CD4-positive, alpha-beta T cell (primary cell): ENCODE measurements at regions of chr11 and their contacts with region 1.

Region 1: DNA sequence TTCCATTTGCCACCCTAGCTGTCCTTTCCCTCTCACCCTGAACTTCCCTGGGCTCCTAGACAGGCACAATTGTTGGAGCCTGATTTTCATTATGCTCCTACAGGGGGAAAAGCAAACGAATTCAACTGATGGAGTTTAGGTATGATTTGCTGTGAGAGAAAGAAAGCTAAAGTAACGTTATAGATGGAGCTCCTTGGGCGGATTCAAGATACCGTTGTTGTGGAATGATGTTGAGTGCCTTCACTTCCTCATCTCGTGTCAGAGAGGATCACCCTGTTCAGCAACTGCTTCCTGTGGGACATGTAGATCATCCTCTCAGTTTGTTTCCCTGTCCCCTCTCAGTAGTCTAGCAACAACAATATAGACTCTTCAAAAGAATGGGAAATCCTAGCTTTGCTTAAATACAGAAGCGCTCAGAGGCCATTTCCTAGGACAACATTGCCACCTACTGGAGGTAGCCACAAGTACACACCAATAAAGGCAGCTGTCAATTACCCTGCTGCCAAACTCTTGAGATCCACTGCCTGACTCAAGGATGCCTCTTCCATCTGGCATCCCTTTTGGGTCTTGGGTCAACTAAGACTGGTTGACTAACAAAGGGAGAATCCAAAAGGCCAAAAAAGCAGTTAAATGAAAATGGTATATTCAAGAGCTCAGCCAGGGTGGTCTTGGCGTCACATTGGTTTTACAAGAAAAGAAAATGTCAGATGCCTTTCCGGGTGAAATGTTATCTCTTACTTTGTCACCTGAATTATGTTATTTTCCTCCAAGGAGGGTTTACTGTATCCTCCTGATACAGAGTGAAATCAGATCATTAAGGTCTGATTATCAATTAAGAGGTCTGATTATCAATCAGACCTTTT is 13.5 kb upstream of the DTX4 start:
- DNase-seq: peak; percentile 34 to 88 (median 48)
- ATAC-seq: peak; percentile 97
- H3K4me3 ChIP-seq: no peak overlapping the region
- H3K4me3 Mint-ChIP-seq: no peak overlapping the region
- H3K27ac ChIP-seq: no peak overlapping the region
- H3K27ac Mint-ChIP-seq: no peak overlapping the region
- H3K4me1 ChIP-seq: no peaks in the 10 kb centered on the region
- H3K4me1 Mint-ChIP-seq: peaks cover 9% of the 10 kb centered on the region
- H3K27me3 ChIP-seq: no peaks in the 10 kb centered on the region
- H3K27me3 Mint-ChIP-seq: peaks cover 9% of the 10 kb centered on the region
- CTCF ChIP-seq: peak; percentile 82

Region 2: DNA sequence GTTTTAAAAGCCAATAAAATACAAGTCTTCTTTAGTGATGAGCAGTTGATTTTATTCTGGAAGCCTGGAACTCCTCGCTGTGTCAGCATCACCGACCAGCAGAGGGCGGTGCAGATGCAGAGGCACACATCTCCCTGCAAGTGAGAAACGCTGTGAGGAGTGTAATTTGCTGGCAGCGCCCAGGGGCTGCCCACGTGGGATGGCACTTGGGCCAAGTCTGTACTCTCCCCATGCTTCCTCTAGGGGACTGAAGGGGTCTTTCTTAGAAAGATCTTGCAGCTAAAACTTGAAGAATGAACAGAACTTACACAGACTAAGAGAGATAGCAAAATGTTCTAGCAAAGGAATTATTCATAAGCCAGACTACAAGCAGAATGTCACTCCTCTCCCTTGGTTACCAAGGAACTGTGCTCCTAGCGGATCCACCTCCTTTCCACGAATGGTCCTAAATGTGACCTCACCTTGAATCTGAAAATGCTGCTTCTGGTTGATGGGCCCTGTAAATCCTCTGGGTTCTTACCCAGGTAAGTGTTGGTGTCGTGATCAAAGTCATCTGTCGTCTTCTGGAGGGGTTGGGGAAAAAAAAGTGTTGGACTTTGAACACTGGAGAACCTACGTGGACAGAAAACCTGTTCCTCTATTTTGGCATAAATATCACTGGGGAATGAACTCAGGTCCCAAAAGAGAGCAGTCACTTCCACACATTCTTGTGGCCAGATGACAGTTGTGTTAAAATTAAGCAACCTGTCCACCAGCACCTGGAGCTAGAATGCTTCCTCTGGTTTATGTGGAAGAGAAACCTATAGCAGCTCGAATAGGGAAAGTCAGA is 504.1 kb before region 1 on chr11:
- CTCF ChIA-PET with region 1: no interaction called
- POLR2A ChIA-PET with region 1: no interaction called
- intact Hi-C with region 1: loop called (anchors 5 kb)
- DNase-seq: peak; percentile 64 to 86 (median 70)
- ATAC-seq: peak; percentile 99
- H3K4me3 ChIP-seq: no peak overlapping the region
- H3K4me3 Mint-ChIP-seq: no peak overlapping the region
- H3K27ac ChIP-seq: no peak overlapping the region
- H3K27ac Mint-ChIP-seq: no peak overlapping the region
- H3K4me1 ChIP-seq: peaks cover 3% of the 10 kb centered on the region
- H3K4me1 Mint-ChIP-seq: peaks cover 7% of the 10 kb centered on the region
- H3K27me3 ChIP-seq: no peaks in the 10 kb centered on the region
- H3K27me3 Mint-ChIP-seq: no peaks in the 10 kb centered on the region
- CTCF ChIP-seq: peak; percentile 96

Region 3: GRCh38 chr11:58958500-58958899 is 199.9 kb before region 1 on chr11:
- CTCF ChIA-PET with region 1: no interaction called
- POLR2A ChIA-PET with region 1: no interaction called
- intact Hi-C with region 1: loop called in 1 of 2 experiments (anchors 5 kb)
- DNase-seq: peak in 10 of 14 experiments; percentile 1 to 60 (median 12)
- ATAC-seq: no peak
- H3K4me3 ChIP-seq: no peak overlapping the region
- H3K4me3 Mint-ChIP-seq: no peak overlapping the region
- H3K27ac ChIP-seq: no peak overlapping the region
- H3K27ac Mint-ChIP-seq: no peak overlapping the region
- H3K4me1 ChIP-seq: no peaks in the 10 kb centered on the region
- H3K4me1 Mint-ChIP-seq: no peaks in the 10 kb centered on the region
- H3K27me3 ChIP-seq: no peaks in the 10 kb centered on the region
- H3K27me3 Mint-ChIP-seq: peaks cover 20% of the 10 kb centered on the region
- CTCF ChIP-seq: peak; percentile 25

Region 4: GRCh38 chr11:59053387-59053786 is 105.0 kb before region 1 on chr11:
- CTCF ChIA-PET with region 1: interaction called, 5 read pairs
- POLR2A ChIA-PET with region 1: no interaction called
- intact Hi-C with region 1: loop called (anchors 1 kb)
- DNase-seq: peak; percentile 68 to 88 (median 76)
- ATAC-seq: peak; percentile 68
- H3K4me3 ChIP-seq: no peak overlapping the region
- H3K4me3 Mint-ChIP-seq: no peak overlapping the region
- H3K27ac ChIP-seq: no peak overlapping the region
- H3K27ac Mint-ChIP-seq: no peak overlapping the region
- H3K4me1 ChIP-seq: peaks cover 6% of the 10 kb centered on the region
- H3K4me1 Mint-ChIP-seq: peaks cover 7% of the 10 kb centered on the region
- H3K27me3 ChIP-seq: no peaks in the 10 kb centered on the region
- H3K27me3 Mint-ChIP-seq: peaks cover 28% of the 10 kb centered on the region
- CTCF ChIP-seq: peak; percentile 78

Region 5: DNA sequence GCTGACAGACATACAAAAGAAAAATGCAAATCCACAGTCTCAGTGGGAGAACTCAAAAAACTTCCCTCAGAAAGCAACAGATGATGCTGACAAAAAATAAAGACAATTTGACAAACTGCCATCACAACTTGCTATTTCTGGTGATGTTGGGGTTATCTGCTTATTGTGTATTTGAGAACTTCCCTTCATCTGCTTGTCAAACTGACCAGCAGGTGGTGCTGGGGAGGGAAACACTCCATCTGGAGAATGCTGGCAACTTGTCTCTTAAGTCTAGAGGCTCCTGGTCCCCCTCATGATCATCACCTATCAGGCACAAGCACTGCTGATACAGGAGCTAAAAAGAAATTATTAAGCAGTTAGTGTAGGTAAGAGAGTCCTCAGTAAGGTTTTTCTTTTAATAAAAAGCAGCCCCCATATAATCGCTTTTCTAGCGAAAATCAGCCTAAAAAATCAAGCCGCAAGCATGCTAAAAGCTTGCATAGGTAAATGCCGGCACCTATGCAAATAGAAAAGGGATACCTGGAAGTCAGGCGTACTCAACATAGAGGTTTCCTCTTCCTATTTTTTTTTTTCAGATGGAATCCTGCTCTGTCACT is 61.2 kb before region 1 on chr11:
- CTCF ChIA-PET with region 1: interaction called, 5 read pairs
- POLR2A ChIA-PET with region 1: interaction called, 4 read pairs
- intact Hi-C with region 1: loop called (anchors 1 kb)
- DNase-seq: peak; percentile 51 to 84 (median 60)
- ATAC-seq: peak; percentile 79
- H3K4me3 ChIP-seq: no peak overlapping the region
- H3K4me3 Mint-ChIP-seq: no peak overlapping the region
- H3K27ac ChIP-seq: no peak overlapping the region
- H3K27ac Mint-ChIP-seq: no peak overlapping the region
- H3K4me1 ChIP-seq: peaks cover 8% of the 10 kb centered on the region
- H3K4me1 Mint-ChIP-seq: peaks cover 8% of the 10 kb centered on the region
- H3K27me3 ChIP-seq: peaks cover 0 to 12% of the 10 kb centered on the region in 2 experiments
- H3K27me3 Mint-ChIP-seq: peaks cover 43% of the 10 kb centered on the region
- CTCF ChIP-seq: peak; percentile 76